ENCODE measurements at regions of chr6 and their contacts with region 1.

Region 1: GRCh38 chr6:63802606-63803206 is 167.1 kb downstream of the PHF3 start:
- DNase-seq: no peak
- ATAC-seq: no peak
- H3K4me3 ChIP-seq: no peak overlapping the region
- H3K27ac ChIP-seq: no peak overlapping the region
- H3K4me1 ChIP-seq: peaks cover 13 to 19% of the 10 kb centered on the region in 2 donors
- H3K27me3 ChIP-seq: peaks cover 0 to 1% (median 0%) of the 10 kb centered on the region in 3 donors
- CTCF ChIP-seq: peak; percentile 15 to 37 (median 28)
- POLR2A ChIP-seq: no peak

Region 2: DNA sequence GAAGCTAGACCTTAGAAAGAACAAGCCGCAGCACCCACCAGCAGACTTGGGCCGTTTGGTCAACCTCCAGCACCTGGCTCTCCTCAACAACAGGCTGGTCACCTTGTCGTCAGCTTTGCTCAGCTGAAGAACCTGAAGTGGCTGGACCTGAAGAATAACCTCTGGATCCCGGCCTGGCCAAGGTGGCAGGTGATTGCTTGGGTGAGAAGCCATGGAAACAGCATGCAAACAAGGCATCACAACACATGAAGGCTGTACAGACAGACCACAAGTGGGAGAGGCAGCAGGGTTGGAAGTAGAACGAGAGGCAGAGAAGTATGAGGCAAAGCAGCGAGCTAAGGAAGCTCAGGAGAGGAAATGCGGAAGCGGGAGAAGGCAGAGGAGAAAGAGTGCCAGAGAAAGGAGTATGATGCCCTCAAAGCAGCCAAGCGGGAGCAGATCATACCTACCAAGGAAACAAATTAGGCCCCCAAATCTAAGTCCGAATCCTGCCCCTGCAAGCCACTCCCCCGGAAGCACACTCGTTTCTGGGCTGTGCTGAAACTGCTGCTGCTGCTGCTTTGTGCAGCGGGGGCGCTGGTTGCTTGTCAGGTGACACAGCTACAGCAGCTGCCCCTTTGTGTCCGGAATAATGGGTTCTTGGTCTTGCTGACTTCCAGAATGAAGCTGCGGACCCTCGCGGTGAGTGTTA is 361.3 kb before region 1 on chr6:
- in situ Hi-C with region 1: no loop called
- intact Hi-C with region 1: loop called (anchors 10 kb)
- DNase-seq: no peak
- ATAC-seq: no peak
- H3K4me3 ChIP-seq: no peak overlapping the region
- H3K27ac ChIP-seq: no peak overlapping the region
- H3K4me1 ChIP-seq: peaks cover 0 to 3% of the 10 kb centered on the region in 2 donors
- H3K27me3 ChIP-seq: no peaks in the 10 kb centered on the region
- CTCF ChIP-seq: no peak
- POLR2A ChIP-seq: no peak

Measured in gastrocnemius medialis (tissue), 4 donors.